CD4-positive, alpha-beta T cell (primary cell): ENCODE measurements at regions of chr9 and their contacts with region 1.

Region 1: DNA sequence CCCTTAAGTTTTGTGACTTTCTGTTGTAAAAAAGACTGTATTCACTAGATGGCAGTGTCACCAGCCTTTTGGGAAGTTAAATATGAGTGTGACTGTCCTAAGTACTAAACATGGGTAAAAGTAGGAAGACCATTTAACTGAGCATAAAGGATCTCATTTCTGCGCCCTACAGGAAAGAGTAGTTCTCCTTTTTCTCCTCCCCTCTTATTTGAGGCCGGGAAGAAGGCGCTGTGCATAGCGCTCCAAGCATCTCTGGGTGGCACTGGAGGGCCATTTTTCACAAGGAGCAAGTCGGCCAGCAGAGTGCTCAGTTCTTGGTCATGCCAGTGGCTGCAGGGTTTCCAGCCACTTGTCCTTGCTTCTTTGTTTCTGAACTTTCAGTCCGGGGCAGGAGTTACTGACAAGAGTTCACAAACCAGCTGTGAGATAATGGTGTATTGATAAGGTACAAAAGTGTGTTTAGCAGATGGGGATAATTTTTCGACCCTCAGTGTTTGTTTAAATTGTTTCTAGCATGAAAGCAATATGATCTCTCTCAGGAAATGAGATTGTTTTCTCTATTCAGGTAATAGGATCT is 227.6 kb upstream of the DMRT1 start:
- DNase-seq: peak in 7 of 14 experiments; percentile 8 to 63 (median 20)
- ATAC-seq: peak; percentile 59
- H3K4me3 ChIP-seq: no peak overlapping the region
- H3K4me3 Mint-ChIP-seq: no peak overlapping the region
- H3K27ac ChIP-seq: no peak overlapping the region
- H3K27ac Mint-ChIP-seq: no peak overlapping the region
- H3K4me1 ChIP-seq: no peaks in the 10 kb centered on the region
- H3K4me1 Mint-ChIP-seq: no peaks in the 10 kb centered on the region
- H3K27me3 ChIP-seq: no peaks in the 10 kb centered on the region
- H3K27me3 Mint-ChIP-seq: no peaks in the 10 kb centered on the region
- CTCF ChIP-seq: peak; percentile 83

Region 2: DNA sequence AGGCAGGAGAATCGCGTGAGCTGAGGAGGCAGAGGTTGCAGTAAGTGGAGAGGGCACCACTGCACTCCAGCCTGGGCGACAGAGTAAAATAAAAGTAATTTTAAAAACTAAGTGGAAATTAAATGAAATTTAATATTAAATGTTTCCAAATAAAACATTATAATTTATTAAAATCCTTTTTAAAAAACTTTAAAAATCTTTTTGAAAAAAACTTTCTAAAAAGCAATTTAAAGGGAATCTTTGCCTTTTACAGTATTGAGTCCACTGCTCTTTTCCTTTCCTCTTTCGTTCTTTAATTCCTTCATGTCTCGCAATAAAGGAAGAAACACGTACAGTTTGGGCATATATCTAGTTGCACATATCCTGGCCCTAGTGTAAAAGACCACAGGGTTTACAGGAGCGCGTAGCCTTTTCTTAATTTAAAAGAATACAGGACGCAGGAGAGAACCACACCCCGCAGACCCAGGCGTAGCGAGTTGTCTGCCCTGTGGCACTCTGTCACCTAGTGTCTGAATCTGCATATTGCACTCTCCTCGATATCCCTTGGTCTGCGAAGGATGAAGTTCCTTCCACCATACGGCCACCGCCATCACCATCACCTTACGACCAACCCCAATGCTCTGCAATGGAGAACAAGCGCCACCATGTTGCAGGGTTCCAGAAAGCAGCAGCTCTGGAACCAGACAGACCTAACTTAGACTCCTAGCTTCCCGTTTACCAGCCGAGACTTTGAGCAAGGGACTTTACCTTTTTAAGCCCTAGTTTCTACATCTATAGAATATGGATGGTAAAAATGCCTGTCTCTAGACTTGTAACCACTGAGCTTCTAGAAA is 150.0 kb after region 1 on chr9:
- CTCF ChIA-PET with region 1: no interaction called
- POLR2A ChIA-PET with region 1: no interaction called
- intact Hi-C with region 1: loop called in 1 of 2 experiments (anchors 2 kb)
- DNase-seq: peak in 8 of 14 experiments; percentile 4 to 60 (median 24)
- ATAC-seq: peak; percentile 57
- H3K4me3 ChIP-seq: no peak overlapping the region
- H3K4me3 Mint-ChIP-seq: no peak overlapping the region
- H3K27ac ChIP-seq: no peak overlapping the region
- H3K27ac Mint-ChIP-seq: no peak overlapping the region
- H3K4me1 ChIP-seq: no peaks in the 10 kb centered on the region
- H3K4me1 Mint-ChIP-seq: no peaks in the 10 kb centered on the region
- H3K27me3 ChIP-seq: peaks cover 4 to 13% of the 10 kb centered on the region in 2 experiments
- H3K27me3 Mint-ChIP-seq: peaks cover 26% of the 10 kb centered on the region
- CTCF ChIP-seq: peak; percentile 33

Region 3: GRCh38 chr9:806285-807156 is 192.7 kb after region 1 on chr9:
- CTCF ChIA-PET with region 1: no interaction called
- POLR2A ChIA-PET with region 1: no interaction called
- intact Hi-C with region 1: loop called in 1 of 2 experiments (anchors 2 kb)
- DNase-seq: peak in 3 of 14 experiments; percentile 16 to 43 (median 41)
- ATAC-seq: no peak
- H3K4me3 ChIP-seq: no peak overlapping the region
- H3K4me3 Mint-ChIP-seq: no peak overlapping the region
- H3K27ac ChIP-seq: no peak overlapping the region
- H3K27ac Mint-ChIP-seq: no peak overlapping the region
- H3K4me1 ChIP-seq: no peaks in the 10 kb centered on the region
- H3K4me1 Mint-ChIP-seq: no peaks in the 10 kb centered on the region
- H3K27me3 ChIP-seq: peaks cover 0 to 5% of the 10 kb centered on the region in 2 experiments
- H3K27me3 Mint-ChIP-seq: peaks cover 20% of the 10 kb centered on the region
- CTCF ChIP-seq: peak; percentile 49

Region 4: DNA sequence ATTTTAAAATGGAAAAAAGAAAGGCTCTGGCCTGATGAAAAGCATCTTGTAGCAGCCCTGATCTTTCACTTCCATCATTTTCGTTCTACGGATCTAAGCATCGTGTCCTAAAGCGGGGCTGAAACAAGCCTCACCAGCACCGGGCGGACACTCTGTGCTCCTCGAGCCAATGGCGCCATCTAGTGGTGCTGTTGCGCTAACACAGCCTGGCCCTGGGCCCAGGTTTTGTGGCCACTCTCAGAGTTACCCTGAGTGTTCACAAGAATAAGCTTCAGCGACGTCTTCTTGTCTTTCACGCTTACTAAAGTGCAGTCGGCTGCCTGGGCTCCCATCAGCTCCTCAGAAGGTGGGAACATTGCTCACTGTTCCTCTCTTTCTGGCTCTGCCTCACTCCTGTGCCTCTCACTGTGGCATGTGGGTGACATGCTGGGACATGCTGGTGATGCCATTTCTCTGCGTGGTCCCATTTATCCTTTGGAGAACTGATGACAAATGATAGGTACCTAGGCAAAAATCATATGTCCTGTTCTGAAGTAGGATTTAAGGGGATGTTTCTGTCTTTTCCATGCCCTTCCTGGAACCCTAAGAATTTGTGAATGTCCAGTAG is 395.3 kb after region 1 on chr9:
- CTCF ChIA-PET with region 1: no interaction called
- POLR2A ChIA-PET with region 1: no interaction called
- intact Hi-C with region 1: loop called in 1 of 2 experiments (anchors 2 kb)
- DNase-seq: peak; percentile 30 to 82 (median 65)
- ATAC-seq: peak; percentile 73
- H3K4me3 ChIP-seq: no peak overlapping the region
- H3K4me3 Mint-ChIP-seq: no peak overlapping the region
- H3K27ac ChIP-seq: no peak overlapping the region
- H3K27ac Mint-ChIP-seq: no peak overlapping the region
- H3K4me1 ChIP-seq: peaks cover 4% of the 10 kb centered on the region
- H3K4me1 Mint-ChIP-seq: no peaks in the 10 kb centered on the region
- H3K27me3 ChIP-seq: peaks cover 4 to 11% of the 10 kb centered on the region in 2 experiments
- H3K27me3 Mint-ChIP-seq: peaks cover 65% of the 10 kb centered on the region
- CTCF ChIP-seq: peak; percentile 66